ENCODE measurements at regions of chr2 and their contacts with region 1.

Region 1: GRCh38 chr2:156332534-156333273 is at the start of gene NR4A2:
- DNase-seq: peak; percentile 87 to 91
- ATAC-seq: peak; percentile 65 to 85 (median 77)
- H3K4me3 ChIP-seq: peak within 1 kb of the TSS; percentile 62 to 91 (median 80)
- H3K27ac ChIP-seq: peak within 1 kb of the TSS; percentile 97 to 100 (median 99)
- H3K4me1 ChIP-seq: peaks cover 0 to 46% (median 13%) of the 10 kb centered on the region in 9 donors
- H3K27me3 ChIP-seq: peaks cover 0 to 37% (median 19%) of the 10 kb centered on the region in 7 donors
- CTCF ChIP-seq: no peak
- total RNA-seq, gene NR4A2: 1.2 to 31.2 (median 5.3) TPM

Region 2: DNA sequence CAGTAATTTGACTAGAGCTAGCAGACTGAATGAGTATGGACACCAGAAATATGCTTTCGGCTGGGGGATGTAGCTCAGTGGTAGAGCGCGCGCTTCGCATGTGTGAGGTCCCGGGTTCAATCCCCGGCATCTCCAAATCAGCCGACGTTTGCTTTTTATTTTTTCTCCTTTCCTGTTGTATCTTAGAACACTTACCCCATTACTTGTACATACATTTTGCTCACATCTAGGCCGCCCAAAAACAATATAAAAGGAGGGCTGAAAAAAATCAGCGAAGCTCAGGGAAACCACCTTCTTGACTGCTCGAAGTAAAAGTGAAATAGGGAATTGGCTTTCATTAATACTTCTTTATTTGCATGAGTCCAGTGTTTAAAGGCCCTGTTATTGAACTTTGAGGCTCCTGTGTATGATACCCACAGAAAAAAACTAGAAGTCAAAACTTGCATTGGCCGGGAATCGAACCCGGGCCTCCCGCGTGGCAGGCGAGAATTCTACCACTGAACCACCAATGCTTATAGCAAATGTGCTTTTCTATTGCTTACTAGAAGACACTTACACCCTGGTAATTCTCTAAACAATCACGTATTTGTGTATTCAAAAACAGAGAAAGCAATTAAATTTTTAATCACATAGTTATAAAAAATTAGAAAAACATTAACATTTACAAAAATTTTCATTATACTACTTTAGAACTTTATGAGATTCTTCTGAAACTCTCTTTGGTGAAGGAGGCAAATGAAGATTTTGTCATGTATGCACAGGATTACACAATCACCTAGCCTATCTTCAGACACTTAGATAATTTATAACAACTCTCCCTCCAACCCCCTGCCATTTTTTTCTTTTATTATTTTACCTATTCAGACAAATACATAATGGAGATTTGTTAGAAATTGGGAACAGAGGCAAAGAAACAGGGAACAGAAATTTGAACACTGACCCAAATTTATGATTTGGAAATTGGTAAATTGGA is 68.3 kb after region 1 on chr2:
- intact Hi-C with region 1: loop called in 7 of 10 experiments (anchors 1 to 5 kb)
- DNase-seq: peak; percentile 59 to 79
- ATAC-seq: peak; percentile 90 to 97 (median 92)
- H3K4me3 ChIP-seq: peak overlapping the region; percentile 51 to 85 (median 75)
- H3K27ac ChIP-seq: peak overlapping the region; percentile 52 to 97 (median 89)
- H3K4me1 ChIP-seq: peaks cover 0 to 26% (median 7%) of the 10 kb centered on the region in 9 donors
- H3K27me3 ChIP-seq: peaks cover 0 to 3% (median 0%) of the 10 kb centered on the region in 7 donors
- CTCF ChIP-seq: no peak

Region 3: GRCh38 chr2:156435715-156436496 is 103.2 kb after region 1 on chr2 and contains the start of gene GPD2:
- intact Hi-C with region 1: loop called in 3 of 10 experiments (anchors 2 to 10 kb)
- DNase-seq: peak; percentile 92 to 94
- ATAC-seq: peak; percentile 97 to 100 (median 99)
- H3K4me3 ChIP-seq: peak within 1 kb of the TSS; percentile 45 to 92 (median 72)
- H3K27ac ChIP-seq: peak within 1 kb of the TSS; percentile 92 to 100 (median 99)
- H3K4me1 ChIP-seq: peaks cover 5 to 47% (median 24%) of the 10 kb centered on the region in 9 donors
- H3K27me3 ChIP-seq: no peaks in the 10 kb centered on the region
- CTCF ChIP-seq: peak in 5 of 9 donors; percentile 11 to 47 (median 32)
- total RNA-seq, gene GPD2: 10.7 to 20.9 (median 15.5) TPM

Region 4: GRCh38 chr2:156455451-156455901 is 122.8 kb after region 1 on chr2:
- intact Hi-C with region 1: loop called in 2 of 10 experiments (anchors 5 kb)
- DNase-seq: no peak
- ATAC-seq: peak in 1 of 8 donors; percentile 38
- H3K4me3 ChIP-seq: no peak overlapping the region
- H3K27ac ChIP-seq: no peak overlapping the region
- H3K4me1 ChIP-seq: peaks cover 0 to 32% (median 22%) of the 10 kb centered on the region in 9 donors
- H3K27me3 ChIP-seq: no peaks in the 10 kb centered on the region
- CTCF ChIP-seq: no peak

Measured in heart right ventricle (tissue), 16 donors.